Activated B cell treated with CpG ODN at 0.5 μM for 24 hours (primary cell): ENCODE measurements at regions of chr1 and their contacts with region 1.

Region 1: GRCh38 chr1:111619635-111620440 is at the start of gene RAP1A:
- DNase-seq: peak; percentile 88
- ATAC-seq: peak; percentile 77
- H3K4me3 Mint-ChIP-seq: peak within 1 kb of the TSS; percentile 95
- H3K27ac Mint-ChIP-seq: peak within 1 kb of the TSS; percentile 93
- H3K4me1 Mint-ChIP-seq: peaks cover 82% of the 10 kb centered on the region
- H3K27me3 Mint-ChIP-seq: no peaks in the 10 kb centered on the region
- CTCF ChIP-seq: no peak
- total RNA-seq, gene RAP1A: 92.4 and 93.8 TPM in 2 replicates

Region 2: DNA sequence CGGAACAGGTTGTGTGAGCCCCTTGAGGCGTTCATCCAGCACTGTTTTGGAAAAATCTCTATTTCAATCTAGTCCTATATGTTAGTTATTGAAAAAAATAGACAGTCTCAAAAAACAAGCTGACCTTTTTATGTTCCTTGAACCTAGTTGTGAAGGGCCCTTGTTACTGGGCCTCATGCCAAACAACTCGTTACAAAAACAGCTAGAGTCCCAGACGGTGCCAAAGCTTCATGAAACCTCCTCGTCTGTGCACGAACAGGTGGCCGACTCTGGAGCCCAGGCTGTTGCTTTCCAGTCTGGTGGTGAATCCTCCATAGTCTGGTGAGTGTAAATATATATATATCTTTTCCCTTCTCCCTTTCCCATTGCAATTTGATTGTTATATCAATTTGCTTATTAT is 329.2 kb before region 1 on chr1 and contains the start of gene CHIA:
- CTCF ChIA-PET with region 1: no interaction called
- POLR2A ChIA-PET with region 1: no interaction called
- intact Hi-C with region 1: no loop called
- DNase-seq: no peak
- ATAC-seq: no peak
- H3K4me3 Mint-ChIP-seq: no peak within 1 kb of the TSS
- H3K27ac Mint-ChIP-seq: no peak within 1 kb of the TSS
- H3K4me1 Mint-ChIP-seq: no peaks in the 10 kb centered on the region
- H3K27me3 Mint-ChIP-seq: no peaks in the 10 kb centered on the region
- CTCF ChIP-seq: no peak
- total RNA-seq, gene CHIA: not detected in 2 replicates

Region 3: DNA sequence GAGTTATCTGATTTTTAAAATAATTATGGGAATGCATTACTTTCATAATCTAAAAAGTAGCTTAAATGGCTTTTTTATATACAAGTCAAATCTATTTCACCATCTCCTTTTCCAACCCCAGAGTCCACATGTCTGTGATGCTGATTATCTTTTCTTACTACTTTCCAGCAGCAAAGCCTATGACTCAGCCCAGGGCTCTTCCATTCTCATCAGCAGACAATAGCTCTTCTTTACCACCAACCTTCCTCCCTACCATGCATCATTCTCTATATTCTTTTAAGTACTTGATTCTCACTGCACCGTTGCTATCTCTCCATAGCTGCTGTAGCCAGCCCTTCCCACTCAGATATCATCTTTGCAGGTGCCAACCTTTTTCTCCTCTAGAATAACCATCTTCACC is 253.6 kb before region 1 on chr1:
- CTCF ChIA-PET with region 1: no interaction called
- POLR2A ChIA-PET with region 1: no interaction called
- intact Hi-C with region 1: no loop called
- DNase-seq: no peak
- ATAC-seq: no peak
- H3K4me3 Mint-ChIP-seq: no peak overlapping the region
- H3K27ac Mint-ChIP-seq: no peak overlapping the region
- H3K4me1 Mint-ChIP-seq: no peaks in the 10 kb centered on the region
- H3K27me3 Mint-ChIP-seq: peaks cover 23% of the 10 kb centered on the region
- CTCF ChIP-seq: no peak

Region 4: GRCh38 chr1:111582644-111583618 is 36.9 kb before region 1 on chr1:
- CTCF ChIA-PET with region 1: no interaction called
- POLR2A ChIA-PET with region 1: interaction called, 14 read pairs
- intact Hi-C with region 1: no loop called
- DNase-seq: no peak
- ATAC-seq: no peak
- H3K4me3 Mint-ChIP-seq: no peak overlapping the region
- H3K27ac Mint-ChIP-seq: no peak overlapping the region
- H3K4me1 Mint-ChIP-seq: peaks cover 8% of the 10 kb centered on the region
- H3K27me3 Mint-ChIP-seq: no peaks in the 10 kb centered on the region
- CTCF ChIP-seq: no peak

Region 5: GRCh38 chr1:111592389-111593361 is 27.2 kb before region 1 on chr1:
- CTCF ChIA-PET with region 1: interaction called, 3 read pairs
- POLR2A ChIA-PET with region 1: interaction called, 50 read pairs
- intact Hi-C with region 1: loop called (anchors 1 kb)
- DNase-seq: peak; percentile 58
- ATAC-seq: peak; percentile 93
- H3K4me3 Mint-ChIP-seq: peak overlapping the region; percentile 64
- H3K27ac Mint-ChIP-seq: peak overlapping the region; percentile 90
- H3K4me1 Mint-ChIP-seq: peaks cover 55% of the 10 kb centered on the region
- H3K27me3 Mint-ChIP-seq: no peaks in the 10 kb centered on the region
- CTCF ChIP-seq: no peak

Region 6: DNA sequence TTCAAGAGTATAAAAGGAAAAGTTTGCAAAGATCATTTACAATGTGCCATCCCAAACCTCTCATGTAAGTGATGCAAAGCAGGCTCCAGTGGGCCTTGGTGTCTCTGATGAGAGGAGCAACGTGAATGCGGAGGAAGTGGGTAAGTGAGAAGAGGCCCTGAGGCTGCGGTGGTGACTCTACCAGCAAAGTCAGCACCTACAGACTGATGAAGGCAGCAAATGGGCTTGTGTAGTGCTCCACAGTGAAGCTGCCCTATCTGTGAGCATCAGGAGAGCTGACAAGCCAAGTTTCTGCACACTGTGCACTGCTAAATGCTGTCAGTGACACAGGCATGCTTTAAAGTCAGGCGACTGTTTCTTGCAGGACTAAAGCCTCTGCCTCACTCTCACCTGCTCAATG is 15.9 kb before region 1 on chr1:
- CTCF ChIA-PET with region 1: interaction called, 6 read pairs
- POLR2A ChIA-PET with region 1: interaction called, 159 read pairs
- intact Hi-C with region 1: loop called (anchors 1 kb)
- DNase-seq: no peak
- ATAC-seq: peak; percentile 65
- H3K4me3 Mint-ChIP-seq: peak overlapping the region; percentile 58
- H3K27ac Mint-ChIP-seq: peak overlapping the region; percentile 81
- H3K4me1 Mint-ChIP-seq: peaks cover 67% of the 10 kb centered on the region
- H3K27me3 Mint-ChIP-seq: no peaks in the 10 kb centered on the region
- CTCF ChIP-seq: no peak

Region 7: DNA sequence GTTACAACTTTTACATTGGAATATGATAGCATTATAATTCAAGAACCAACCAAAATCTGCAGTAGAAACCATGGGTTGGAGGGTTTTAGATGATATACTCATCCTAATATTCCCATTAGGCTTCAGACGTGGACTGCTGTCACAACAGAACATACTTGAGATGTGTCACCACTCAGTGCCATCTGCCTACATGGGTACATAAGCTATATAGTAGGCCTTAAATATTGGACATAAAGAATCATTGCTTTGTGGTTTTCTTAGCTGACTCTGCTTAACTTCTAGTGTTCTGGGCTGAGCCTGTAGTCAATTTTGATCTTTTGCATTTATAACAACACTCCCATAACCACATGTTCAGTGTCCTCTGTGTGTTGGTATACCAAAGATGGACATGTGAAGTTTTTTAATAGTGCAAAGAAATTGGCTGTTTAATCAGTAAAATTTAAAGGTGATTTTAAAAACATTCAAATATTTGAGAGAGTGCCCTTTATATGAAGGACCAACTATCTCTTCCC is 14.0 kb after region 1 on chr1:
- CTCF ChIA-PET with region 1: interaction called, 3 read pairs
- POLR2A ChIA-PET with region 1: interaction called, 3 read pairs
- intact Hi-C with region 1: loop called (anchors 1 kb)
- DNase-seq: no peak
- ATAC-seq: no peak
- H3K4me3 Mint-ChIP-seq: no peak overlapping the region
- H3K27ac Mint-ChIP-seq: no peak overlapping the region
- H3K4me1 Mint-ChIP-seq: peaks cover 83% of the 10 kb centered on the region
- H3K27me3 Mint-ChIP-seq: no peaks in the 10 kb centered on the region
- CTCF ChIP-seq: no peak